A549 (cell line): ENCODE measurements at regions of chr14 and their contacts with region 1.

Region 1: GRCh38 chr14:31937721-31938346 is 139.3 kb upstream of the ARHGAP5 start:
- DNase-seq: peak; percentile 75 to 96
- ATAC-seq: peak; percentile 94 to 97
- H3K4me3 ChIP-seq: no peak overlapping the region
- H3K27ac ChIP-seq: peak overlapping the region; percentile 82 to 89
- H3K4me1 ChIP-seq: peaks cover 76% of the 10 kb centered on the region
- CTCF ChIP-seq: no peak
- EP300 ChIP-seq: peak; percentile 35 to 55; a peak in 1 of 5 replicates
- POLR2A ChIP-seq: no peak
- RAD21 ChIP-seq: peak; percentile 19 to 40; a peak in 2 of 5 replicates

Region 2: GRCh38 chr14:31926123-31926522 is 11.7 kb before region 1 on chr14:
- CTCF ChIA-PET with region 1: interaction called, 25 read pairs
- POLR2A ChIA-PET with region 1: interaction called, 7 read pairs
- DNase-seq: peak; percentile 59 to 71
- ATAC-seq: no peak
- H3K4me3 ChIP-seq: no peak overlapping the region
- H3K27ac ChIP-seq: peak overlapping the region in 1 of 2 experiments; percentile 86; a peak in 4 of 6 replicates
- H3K4me1 ChIP-seq: peaks cover 45% of the 10 kb centered on the region
- CTCF ChIP-seq: peak; percentile 67
- EP300 ChIP-seq: no peak
- POLR2A ChIP-seq: no peak
- RAD21 ChIP-seq: peak; percentile 58 to 67

Region 3: GRCh38 chr14:32004300-32004699 is 66.5 kb after region 1 on chr14:
- CTCF ChIA-PET with region 1: interaction called, 29 read pairs
- POLR2A ChIA-PET with region 1: interaction called, 4 read pairs
- DNase-seq: peak in 1 of 2 experiments; percentile 61
- ATAC-seq: no peak
- H3K4me3 ChIP-seq: no peak overlapping the region
- H3K27ac ChIP-seq: peak overlapping the region; percentile 89 to 92; a peak in 4 of 6 replicates
- H3K4me1 ChIP-seq: peaks cover 53% of the 10 kb centered on the region
- CTCF ChIP-seq: no peak
- EP300 ChIP-seq: no peak
- POLR2A ChIP-seq: no peak
- RAD21 ChIP-seq: no peak

Region 4: GRCh38 chr14:32019276-32019675 is 81.4 kb after region 1 on chr14:
- CTCF ChIA-PET with region 1: interaction called, 11 read pairs
- POLR2A ChIA-PET with region 1: no interaction called
- DNase-seq: no peak
- ATAC-seq: no peak
- H3K4me3 ChIP-seq: no peak overlapping the region
- H3K27ac ChIP-seq: no peak overlapping the region
- H3K4me1 ChIP-seq: no peaks in the 10 kb centered on the region
- CTCF ChIP-seq: no peak
- EP300 ChIP-seq: no peak
- POLR2A ChIP-seq: no peak
- RAD21 ChIP-seq: no peak

Region 5: GRCh38 chr14:32076278-32077080 is 138.6 kb after region 1 on chr14:
- CTCF ChIA-PET with region 1: interaction called, 15 read pairs
- POLR2A ChIA-PET with region 1: interaction called, 17 read pairs
- DNase-seq: peak; percentile 74 to 97
- ATAC-seq: peak; percentile 75 to 82
- H3K4me3 ChIP-seq: peak overlapping the region; percentile 83
- H3K27ac ChIP-seq: peak overlapping the region; percentile 96 to 99
- H3K4me1 ChIP-seq: peaks cover 37% of the 10 kb centered on the region
- CTCF ChIP-seq: no peak
- EP300 ChIP-seq: no peak
- POLR2A ChIP-seq: peak; percentile 83
- RAD21 ChIP-seq: peak in 1 of 2 experiments; percentile 9; a peak in 1 of 5 replicates

Region 6: DNA sequence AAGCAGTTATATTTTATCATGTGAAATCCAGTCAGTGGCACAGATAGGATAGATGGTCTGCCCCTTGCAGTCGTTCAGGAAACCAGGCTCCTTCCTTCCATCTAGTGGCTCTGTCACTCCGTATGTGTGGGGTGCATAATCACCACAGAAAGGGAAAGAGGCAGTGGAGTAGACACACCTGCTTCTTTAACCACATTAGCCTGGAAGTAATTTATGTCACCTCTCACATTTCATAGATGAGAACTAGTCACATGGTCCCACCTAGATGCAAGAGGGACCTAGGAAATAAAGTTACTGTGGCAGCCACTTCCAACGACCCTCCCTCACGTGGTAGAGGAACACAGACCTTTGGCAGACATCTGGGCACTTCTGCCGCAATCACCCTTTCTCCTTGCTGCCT is 279.5 kb after region 1 on chr14:
- CTCF ChIA-PET with region 1: no interaction called
- POLR2A ChIA-PET with region 1: no interaction called
- DNase-seq: no peak
- ATAC-seq: peak in 1 of 2 experiments; percentile 54; a peak in 1 of 6 replicates
- H3K4me3 ChIP-seq: no peak overlapping the region
- H3K27ac ChIP-seq: no peak overlapping the region
- H3K4me1 ChIP-seq: no peaks in the 10 kb centered on the region
- CTCF ChIP-seq: no peak
- EP300 ChIP-seq: no peak
- POLR2A ChIP-seq: no peak
- RAD21 ChIP-seq: no peak

Region 7: DNA sequence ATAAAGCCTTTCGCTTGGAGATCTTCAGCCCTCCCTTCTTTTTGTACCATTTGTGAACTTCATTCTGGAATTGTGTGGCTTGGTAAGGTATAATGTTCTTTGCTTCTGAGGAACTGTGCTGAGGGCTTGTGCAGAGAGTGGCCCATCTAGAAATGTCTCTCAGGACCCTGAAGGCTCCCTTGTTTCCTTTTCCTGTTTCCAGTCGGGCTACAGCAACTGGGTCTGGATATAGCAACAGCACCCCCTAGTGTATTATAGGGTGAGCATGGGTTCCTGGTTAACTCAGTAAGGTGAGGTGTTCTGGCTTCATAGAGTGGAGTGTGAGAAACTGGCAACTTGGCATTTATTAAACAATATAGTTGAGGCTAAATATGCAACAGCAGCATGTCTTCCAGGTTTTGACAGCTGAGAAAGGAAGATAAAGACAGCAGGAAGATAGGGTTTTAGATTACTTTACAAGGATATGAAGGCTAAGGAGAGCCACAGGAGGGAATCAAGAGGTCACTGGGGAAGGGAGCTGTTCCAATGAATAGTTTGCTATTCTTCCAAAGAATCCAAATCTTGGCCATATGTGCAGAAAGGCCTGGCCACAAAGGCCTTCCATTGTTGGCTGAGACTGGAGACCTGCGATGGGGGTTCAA is 314.3 kb after region 1 on chr14:
- CTCF ChIA-PET with region 1: interaction called, 67 read pairs
- POLR2A ChIA-PET with region 1: no interaction called
- DNase-seq: peak; percentile 60 to 80
- ATAC-seq: peak; percentile 87 to 94
- H3K4me3 ChIP-seq: no peak overlapping the region
- H3K27ac ChIP-seq: peak overlapping the region; percentile 1 to 37; a peak in 1 of 6 replicates
- H3K4me1 ChIP-seq: peaks cover 18% of the 10 kb centered on the region; the same call in 2 of the 3 replicates
- CTCF ChIP-seq: peak; percentile 90
- EP300 ChIP-seq: no peak
- POLR2A ChIP-seq: no peak
- RAD21 ChIP-seq: peak; percentile 96 to 99